PC-9 (cell line): ENCODE measurements at regions of chr15 and their contacts with region 1.

Region 1: GRCh38 chr15:89874926-89875564 is 18.7 kb downstream of the AP3S2 start:
- DNase-seq: peak; percentile 55 to 77
- H3K4me3 ChIP-seq: no peak overlapping the region
- H3K27ac ChIP-seq: peak overlapping the region; percentile 22; the same call in 1 of the 2 replicates
- H3K4me1 ChIP-seq: no peaks in the 10 kb centered on the region
- H3K27me3 ChIP-seq: no peaks in the 10 kb centered on the region
- CTCF ChIP-seq: peak; percentile 95

Region 2: GRCh38 chr15:89794627-89795241 is 80.3 kb before region 1 on chr15:
- CTCF ChIA-PET with region 1: interaction called, 11 read pairs
- POLR2A ChIA-PET with region 1: no interaction called
- intact Hi-C with region 1: no loop called
- DNase-seq: no peak
- H3K4me3 ChIP-seq: no peak overlapping the region
- H3K27ac ChIP-seq: peak overlapping the region; percentile 23
- H3K4me1 ChIP-seq: peaks cover 9% of the 10 kb centered on the region
- H3K27me3 ChIP-seq: no peaks in the 10 kb centered on the region
- CTCF ChIP-seq: no peak

Region 3: GRCh38 chr15:89812011-89812835 is 62.8 kb before region 1 on chr15:
- CTCF ChIA-PET with region 1: interaction called, 4 read pairs
- POLR2A ChIA-PET with region 1: interaction called, 3 read pairs
- intact Hi-C with region 1: loop called (anchors 5 kb)
- DNase-seq: peak; percentile 61 to 74
- H3K4me3 ChIP-seq: peak overlapping the region; percentile 76; the same call in 1 of the 2 replicates
- H3K27ac ChIP-seq: peak overlapping the region; percentile 51
- H3K4me1 ChIP-seq: peaks cover 52% of the 10 kb centered on the region
- H3K27me3 ChIP-seq: no peaks in the 10 kb centered on the region
- CTCF ChIP-seq: no peak

Region 4: GRCh38 chr15:89971592-89971997 is 96.5 kb after region 1 on chr15:
- CTCF ChIA-PET with region 1: no interaction called
- POLR2A ChIA-PET with region 1: no interaction called
- intact Hi-C with region 1: no loop called
- DNase-seq: peak in 1 of 2 experiments; percentile 57
- H3K4me3 ChIP-seq: no peak overlapping the region
- H3K27ac ChIP-seq: no peak overlapping the region
- H3K4me1 ChIP-seq: no peaks in the 10 kb centered on the region
- H3K27me3 ChIP-seq: no peaks in the 10 kb centered on the region
- CTCF ChIP-seq: peak; percentile 54